Mammary epithelial cell (primary cell): ENCODE measurements at regions of chrX and their contacts with region 1.

Region 1: GRCh38 chrX:12974796-12975669 is at the start of gene TMSB4X:
- DNase-seq: peak; percentile 76
- H3K4me3 ChIP-seq: peak within 1 kb of the TSS; percentile 79 to 87 (median 80)
- H3K27ac ChIP-seq: peak within 1 kb of the TSS; percentile 93
- H3K4me1 ChIP-seq: peaks cover 7% of the 10 kb centered on the region
- H3K27me3 ChIP-seq: no peaks in the 10 kb centered on the region
- CTCF ChIP-seq: no peak
- total RNA-seq, gene TMSB4X: 1,481 to 1,998 TPM

Region 2: GRCh38 chrX:13022926-13023325 is 47.9 kb after region 1 on chrX:
- CTCF ChIA-PET with region 1: no interaction called
- dilution Hi-C with region 1: no loop called
- in situ Hi-C with region 1: no loop called
- intact Hi-C with region 1: loop called (anchors 5 kb)
- DNase-seq: no peak
- H3K4me3 ChIP-seq: no peak overlapping the region
- H3K27ac ChIP-seq: no peak overlapping the region
- H3K4me1 ChIP-seq: no peaks in the 10 kb centered on the region
- H3K27me3 ChIP-seq: no peaks in the 10 kb centered on the region
- CTCF ChIP-seq: no peak

Region 3: GRCh38 chrX:13101441-13102139 is 126.6 kb after region 1 on chrX:
- CTCF ChIA-PET with region 1: no interaction called
- dilution Hi-C with region 1: no loop called
- in situ Hi-C with region 1: no loop called
- intact Hi-C with region 1: loop called (anchors 10 kb)
- DNase-seq: peak; percentile 97
- H3K4me3 ChIP-seq: no peak overlapping the region
- H3K27ac ChIP-seq: peak overlapping the region; percentile 68
- H3K4me1 ChIP-seq: peaks cover 26% of the 10 kb centered on the region
- H3K27me3 ChIP-seq: no peaks in the 10 kb centered on the region
- CTCF ChIP-seq: no peak

Region 4: GRCh38 chrX:13283950-13284914 is 309.2 kb after region 1 on chrX:
- CTCF ChIA-PET with region 1: no interaction called
- dilution Hi-C with region 1: no loop called
- in situ Hi-C with region 1: no loop called
- intact Hi-C with region 1: loop called (anchors 5 kb)
- DNase-seq: peak; percentile 84
- H3K4me3 ChIP-seq: no peak overlapping the region
- H3K27ac ChIP-seq: peak overlapping the region; percentile 87
- H3K4me1 ChIP-seq: peaks cover 37% of the 10 kb centered on the region
- H3K27me3 ChIP-seq: no peaks in the 10 kb centered on the region
- CTCF ChIP-seq: no peak

Region 5: GRCh38 chrX:13398073-13398823 is 423.2 kb after region 1 on chrX:
- CTCF ChIA-PET with region 1: no interaction called
- dilution Hi-C with region 1: no loop called
- in situ Hi-C with region 1: no loop called
- intact Hi-C with region 1: loop called (anchors 5 kb)
- DNase-seq: peak; percentile 100
- H3K4me3 ChIP-seq: no peak overlapping the region
- H3K27ac ChIP-seq: peak overlapping the region; percentile 95
- H3K4me1 ChIP-seq: peaks cover 30% of the 10 kb centered on the region
- H3K27me3 ChIP-seq: no peaks in the 10 kb centered on the region
- CTCF ChIP-seq: no peak